AG04450 (cell line): ENCODE measurements at regions of chr6 and their contacts with region 1.

Region 1: GRCh38 chr6:32984605-32985389 is 16.4 kb downstream of the BRD2 start:
- DNase-seq: peak; percentile 63
- H3K4me3 ChIP-seq: no peak overlapping the region
- H3K27ac ChIP-seq: no peak overlapping the region
- H3K27me3 ChIP-seq: peaks cover 3% of the 10 kb centered on the region
- CTCF ChIP-seq: peak; percentile 92

Region 2: DNA sequence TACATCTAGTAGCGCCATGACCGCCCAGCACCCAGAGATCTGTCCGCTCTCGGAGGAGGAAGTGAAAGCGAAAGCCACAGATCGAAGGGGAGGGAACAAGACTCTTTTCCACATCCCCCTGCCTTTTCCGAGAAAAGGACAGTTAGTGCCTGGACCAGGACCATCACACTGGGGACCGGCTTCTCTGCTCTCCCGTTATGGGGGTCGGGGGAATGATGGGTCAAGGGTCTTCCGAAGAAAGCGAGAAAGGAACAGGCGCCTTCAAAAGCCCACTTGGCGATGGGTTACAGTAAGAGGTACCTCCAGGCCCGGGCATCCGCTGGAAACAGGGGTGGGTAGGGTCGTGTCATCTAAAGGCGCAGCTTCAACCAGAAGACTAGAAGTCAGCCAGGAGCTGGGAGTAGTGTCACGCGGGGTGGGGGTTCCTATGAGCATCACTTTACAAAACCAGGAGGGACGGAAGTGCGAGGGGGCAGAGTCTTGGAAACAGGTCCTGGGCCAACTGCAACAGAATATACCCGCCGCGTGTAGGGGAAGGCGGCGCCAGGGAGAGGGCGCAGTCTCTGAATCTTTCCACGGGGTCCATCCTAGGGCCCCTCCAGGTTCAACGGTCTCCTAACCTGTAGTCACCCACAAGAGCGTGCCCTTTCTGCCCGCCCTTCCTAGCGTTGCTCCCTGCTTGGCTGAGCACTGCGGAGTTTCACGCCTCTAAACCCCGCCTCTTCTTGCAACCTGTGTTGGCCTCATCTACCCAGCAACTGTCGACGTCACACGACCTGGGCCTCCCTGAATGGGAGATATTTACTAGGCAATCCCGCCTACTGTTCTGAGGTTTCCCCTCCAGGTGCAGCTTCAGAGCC is 140.6 kb before region 1 on chr6 and contains the start of gene PSMB8:
- CTCF ChIA-PET with region 1: interaction called, 45 read pairs
- POLR2A ChIA-PET with region 1: no interaction called
- DNase-seq: peak; percentile 72
- H3K4me3 ChIP-seq: peak within 1 kb of the TSS; percentile 85
- H3K27ac ChIP-seq: peak within 1 kb of the TSS; percentile 73
- H3K27me3 ChIP-seq: no peaks in the 10 kb centered on the region
- CTCF ChIP-seq: peak; percentile 42
- polyA plus RNA-seq, gene PSMB8: 62.0 and 70.0 TPM in 2 replicates

Region 3: GRCh38 chr6:32885698-32886286 is 99.0 kb before region 1 on chr6:
- CTCF ChIA-PET with region 1: interaction called, 147 read pairs
- POLR2A ChIA-PET with region 1: interaction called, 3 read pairs
- DNase-seq: no peak
- H3K4me3 ChIP-seq: no peak overlapping the region
- H3K27ac ChIP-seq: no peak overlapping the region
- H3K27me3 ChIP-seq: peaks cover 2% of the 10 kb centered on the region
- CTCF ChIP-seq: peak; percentile 63

Region 4: GRCh38 chr6:32940656-32941213 is 44.1 kb before region 1 on chr6 and contains the start of gene HLA-DMB:
- CTCF ChIA-PET with region 1: interaction called, 21 read pairs
- POLR2A ChIA-PET with region 1: no interaction called
- DNase-seq: peak; percentile 29
- H3K4me3 ChIP-seq: no peak within 1 kb of the TSS
- H3K27ac ChIP-seq: no peak within 1 kb of the TSS
- H3K27me3 ChIP-seq: peaks cover 20% of the 10 kb centered on the region
- CTCF ChIP-seq: no peak
- polyA plus RNA-seq, gene HLA-DMB: 0.07 and 0.12 TPM in 2 replicates

Region 5: DNA sequence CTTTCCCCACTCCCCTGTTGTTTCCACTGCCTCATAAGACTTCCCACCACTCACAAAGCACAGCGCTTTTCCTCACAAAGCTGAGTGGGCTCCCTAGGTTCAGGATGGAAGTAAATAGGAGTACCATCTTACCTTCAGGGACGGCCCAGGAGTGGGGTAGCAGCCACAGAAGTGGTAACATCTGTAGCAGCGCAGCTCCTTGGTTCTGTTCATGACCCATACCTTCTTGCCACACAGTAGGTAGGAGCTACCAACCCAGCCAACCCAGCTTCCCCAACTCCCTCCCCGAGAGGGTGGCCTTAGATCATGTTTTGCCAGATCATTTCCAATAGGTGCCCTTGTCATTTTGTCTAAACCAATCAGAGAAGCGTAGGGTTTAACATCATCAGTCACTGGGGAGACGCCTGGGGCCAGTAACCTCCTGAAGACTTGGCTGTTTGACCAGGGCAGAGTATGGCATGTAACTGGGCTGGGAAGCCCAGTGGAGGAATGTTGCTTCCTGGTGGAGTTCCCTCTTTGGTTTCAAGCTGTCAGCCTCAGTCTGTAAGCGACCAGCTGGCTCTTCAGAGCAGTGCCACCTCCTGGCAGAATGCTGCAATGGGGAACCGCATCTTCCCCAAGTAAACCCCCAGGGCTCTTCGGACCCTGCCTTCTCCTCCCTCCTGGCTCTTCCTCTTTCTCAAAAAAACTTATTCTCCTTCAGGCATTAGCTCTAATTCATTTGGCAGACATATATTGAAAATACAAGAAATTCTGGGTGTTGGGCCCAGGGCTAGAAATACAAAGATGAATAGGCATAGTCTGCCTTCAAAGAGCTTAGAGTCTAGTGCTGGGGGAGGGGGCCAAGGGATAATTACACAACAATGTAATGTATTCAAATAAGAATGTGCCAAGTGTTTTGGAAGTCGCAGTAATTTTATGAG is 31.7 kb before region 1 on chr6 and contains the start of gene HLA-DMA:
- CTCF ChIA-PET with region 1: interaction called, 33 read pairs
- POLR2A ChIA-PET with region 1: no interaction called
- DNase-seq: peak; percentile 80
- H3K4me3 ChIP-seq: peak within 1 kb of the TSS; percentile 29
- H3K27ac ChIP-seq: no peak within 1 kb of the TSS
- H3K27me3 ChIP-seq: no peaks in the 10 kb centered on the region
- CTCF ChIP-seq: peak; percentile 82
- polyA plus RNA-seq, gene HLA-DMA: 7.1 and 8.2 TPM in 2 replicates